Sigmoid colon (tissue), 7 donors: ENCODE measurements at regions of chr1 and their contacts with region 1.

Region 1: GRCh38 chr1:54421101-54421504 is 14.9 kb upstream of the SSBP3 start:
- DNase-seq: no peak
- H3K4me3 ChIP-seq: no peak overlapping the region
- H3K27ac ChIP-seq: no peak overlapping the region
- H3K4me1 ChIP-seq: peaks cover 0 to 5% (median 0%) of the 10 kb centered on the region in 4 donors
- H3K27me3 ChIP-seq: no peaks in the 10 kb centered on the region
- CTCF ChIP-seq: no peak
- EP300 ChIP-seq: no peak
- POLR2A ChIP-seq: no peak

Region 2: DNA sequence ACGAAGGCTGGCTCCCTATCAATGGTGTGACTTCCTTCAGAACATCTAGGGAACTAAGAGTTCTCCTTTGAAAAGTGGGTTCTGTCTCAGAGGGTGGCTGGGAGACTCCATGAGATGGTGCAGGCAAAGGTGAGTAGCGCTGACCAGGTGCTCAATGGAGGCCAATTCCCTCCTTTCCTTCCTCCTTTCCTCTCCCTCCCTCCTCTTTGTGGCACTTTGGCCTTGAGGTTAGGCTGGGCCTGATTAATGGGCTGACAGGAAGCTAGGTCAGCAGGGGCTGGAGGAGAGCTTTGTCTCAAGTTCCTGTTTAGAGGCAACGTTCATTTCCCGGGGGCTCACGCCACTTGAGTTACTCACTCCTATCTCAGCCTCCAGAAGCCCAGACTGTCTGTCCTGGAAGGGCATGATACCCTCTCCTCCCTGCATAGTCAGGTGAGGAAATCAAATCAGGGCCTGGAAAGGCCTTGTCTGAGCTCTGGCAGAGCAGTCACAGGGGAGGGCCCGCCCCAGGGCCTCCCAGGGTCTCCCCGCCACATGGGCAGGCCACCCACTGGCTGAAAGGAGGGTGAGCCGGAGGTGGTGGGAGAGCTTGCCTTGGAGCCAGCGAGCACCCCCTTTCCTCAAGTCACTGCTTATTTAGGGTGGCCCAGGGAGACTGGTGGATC is 43.5 kb after region 1 on chr1:
- intact Hi-C with region 1: loop called (anchors 5 kb)
- DNase-seq: peak; percentile 53
- H3K4me3 ChIP-seq: no peak overlapping the region
- H3K27ac ChIP-seq: peak overlapping the region in 3 of 4 donors; percentile 34 to 51 (median 42)
- H3K4me1 ChIP-seq: peaks cover 0 to 29% (median 21%) of the 10 kb centered on the region in 4 donors
- H3K27me3 ChIP-seq: no peaks in the 10 kb centered on the region
- CTCF ChIP-seq: no peak
- EP300 ChIP-seq: no peak
- POLR2A ChIP-seq: no peak

Region 3: GRCh38 chr1:54547601-54548388 is 126.7 kb after region 1 on chr1 and contains the start of gene ACOT11:
- intact Hi-C with region 1: no loop called
- DNase-seq: peak; percentile 98
- H3K4me3 ChIP-seq: peak within 1 kb of the TSS; percentile 17 to 51 (median 46)
- H3K27ac ChIP-seq: peak within 1 kb of the TSS; percentile 83 to 90 (median 88)
- H3K4me1 ChIP-seq: peaks cover 0 to 53% (median 51%) of the 10 kb centered on the region in 4 donors
- H3K27me3 ChIP-seq: no peaks in the 10 kb centered on the region
- CTCF ChIP-seq: peak; percentile 66 to 93 (median 78)
- EP300 ChIP-seq: peak; percentile 30 to 83 (median 60)
- POLR2A ChIP-seq: peak in 1 of 2 donors; percentile 50
- total RNA-seq, gene ACOT11: 8.9 to 30.5 (median 19.8) TPM